Activated CD4-positive, alpha-beta T cell treated with anti-CD3 and anti-CD28 coated beads for 36 hours (primary cell): ENCODE measurements at regions of chr3 and their contacts with region 1.

Region 1: GRCh38 chr3:179147873-179148615 is at the start of gene PIK3CA:
- DNase-seq: peak; percentile 95
- ATAC-seq: peak; percentile 79
- H3K4me3 Mint-ChIP-seq: no peak within 1 kb of the TSS
- H3K27ac Mint-ChIP-seq: peak within 1 kb of the TSS; percentile 94
- H3K4me1 Mint-ChIP-seq: peaks cover 39% of the 10 kb centered on the region
- H3K27me3 Mint-ChIP-seq: peaks cover 3% of the 10 kb centered on the region
- total RNA-seq, gene PIK3CA: 15.5 to 17.7 TPM

Region 2: GRCh38 chr3:179071550-179072397 is 76.3 kb before region 1 on chr3 and contains the start of gene ZMAT3:
- CTCF ChIA-PET with region 1: interaction called, 6 read pairs
- POLR2A ChIA-PET with region 1: no interaction called
- intact Hi-C with region 1: loop called (anchors 1 kb)
- DNase-seq: peak; percentile 90
- ATAC-seq: peak; percentile 86
- H3K4me3 Mint-ChIP-seq: peak within 1 kb of the TSS; percentile 95
- H3K27ac Mint-ChIP-seq: peak within 1 kb of the TSS; percentile 92
- H3K4me1 Mint-ChIP-seq: peaks cover 41% of the 10 kb centered on the region
- H3K27me3 Mint-ChIP-seq: no peaks in the 10 kb centered on the region
- total RNA-seq, gene ZMAT3: 9.5 to 9.9 TPM

Region 3: GRCh38 chr3:179227349-179227748 is 79.3 kb after region 1 on chr3:
- CTCF ChIA-PET with region 1: no interaction called
- POLR2A ChIA-PET with region 1: interaction called, 11 read pairs
- intact Hi-C with region 1: no loop called
- DNase-seq: no peak
- ATAC-seq: peak; percentile 51
- H3K4me3 Mint-ChIP-seq: no peak overlapping the region
- H3K27ac Mint-ChIP-seq: peak overlapping the region; percentile 47
- H3K4me1 Mint-ChIP-seq: peaks cover 5% of the 10 kb centered on the region
- H3K27me3 Mint-ChIP-seq: no peaks in the 10 kb centered on the region

Region 4: DNA sequence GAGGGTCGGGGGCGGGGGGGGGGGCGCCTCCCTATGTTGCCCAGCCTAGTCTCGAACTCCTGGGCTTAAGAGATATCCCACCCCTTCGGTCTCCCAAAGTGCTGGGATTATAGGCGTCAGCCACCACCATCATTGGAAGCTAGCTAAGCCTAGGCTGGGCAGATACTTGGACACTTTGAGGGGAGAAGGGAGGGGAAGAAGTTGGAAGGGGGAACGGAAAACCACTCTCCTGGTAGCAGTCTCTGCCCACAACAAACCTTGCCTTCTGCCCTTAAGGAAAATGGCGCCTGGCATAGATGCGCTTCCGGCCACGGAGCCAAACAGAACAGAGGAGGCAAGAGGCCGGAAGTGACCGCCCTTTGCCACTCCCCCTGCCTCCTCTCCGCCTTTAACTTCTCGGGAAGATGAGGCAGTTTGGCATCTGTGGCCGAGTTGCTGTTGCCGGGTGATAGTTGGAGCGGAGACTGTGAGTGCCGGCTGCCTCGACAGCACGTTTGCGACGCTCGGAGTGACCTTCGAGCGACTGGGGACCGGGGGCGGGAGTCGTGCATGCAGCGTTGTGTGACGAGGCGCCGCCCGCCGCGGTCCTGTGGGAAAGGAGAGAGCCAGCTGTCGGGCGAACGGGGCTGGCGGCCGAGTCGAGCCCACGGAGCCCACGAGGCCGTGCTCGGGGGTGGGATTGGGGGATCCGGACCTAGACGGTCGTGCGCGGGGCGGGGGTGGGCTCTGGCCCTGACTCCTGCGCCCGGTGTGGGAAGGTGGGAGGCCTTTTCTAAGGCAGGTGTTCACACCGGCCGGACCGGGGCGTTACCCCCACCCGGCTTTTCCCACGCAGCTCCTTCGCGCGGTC is 199.5 kb after region 1 on chr3 and contains the start of gene MFN1:
- CTCF ChIA-PET with region 1: no interaction called
- POLR2A ChIA-PET with region 1: no interaction called
- intact Hi-C with region 1: loop called in 1 of 2 experiments (anchors 1 kb)
- DNase-seq: peak; percentile 94
- ATAC-seq: peak; percentile 98
- H3K4me3 Mint-ChIP-seq: peak within 1 kb of the TSS; percentile 99
- H3K27ac Mint-ChIP-seq: peak within 1 kb of the TSS; percentile 93
- H3K4me1 Mint-ChIP-seq: peaks cover 22% of the 10 kb centered on the region
- H3K27me3 Mint-ChIP-seq: no peaks in the 10 kb centered on the region
- total RNA-seq, gene MFN1: 24.4 to 30.4 TPM

Region 5: DNA sequence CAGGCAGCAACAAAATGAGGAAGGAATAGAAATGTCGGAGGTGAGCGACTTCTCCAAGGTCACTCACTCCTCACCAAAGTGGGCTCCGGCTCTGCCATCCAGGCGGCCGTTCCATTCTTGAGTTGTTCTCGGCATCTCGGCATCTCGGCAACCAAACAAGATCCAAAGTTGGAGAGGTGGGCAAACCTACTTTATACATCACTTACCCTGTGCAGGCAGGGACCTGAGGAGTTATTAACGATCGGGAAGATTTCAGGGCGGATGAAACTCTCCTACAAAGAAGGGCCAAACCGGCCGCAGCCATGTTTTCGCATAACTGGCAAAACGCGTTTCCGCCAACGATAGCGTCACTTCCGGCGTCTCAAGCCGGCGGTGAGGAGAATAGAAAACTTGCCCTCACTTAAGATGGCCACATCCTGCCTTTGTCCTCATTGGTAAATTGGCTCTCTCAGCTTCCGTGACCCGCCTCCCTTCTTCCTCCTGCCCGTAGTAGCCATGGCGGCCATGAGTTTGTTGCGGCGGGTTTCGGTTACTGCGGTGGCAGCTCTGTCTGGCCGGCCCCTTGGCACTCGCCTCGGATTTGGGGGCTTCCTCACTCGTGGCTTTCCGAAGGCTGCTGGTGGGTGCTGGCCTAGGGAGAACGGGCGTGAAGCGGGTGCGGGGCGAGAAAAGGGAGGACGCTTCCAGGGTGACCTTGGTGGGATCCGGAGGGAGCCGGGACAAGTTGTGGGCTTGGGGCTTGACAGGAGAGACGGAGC is 456.5 kb after region 1 on chr3 and contains the starts of genes MRPL47 and NDUFB5:
- CTCF ChIA-PET with region 1: no interaction called
- POLR2A ChIA-PET with region 1: no interaction called
- intact Hi-C with region 1: loop called (anchors 1 to 5 kb)
- DNase-seq: peak; percentile 95
- ATAC-seq: peak; percentile 92
- H3K4me3 Mint-ChIP-seq: peak within 1 kb of the TSS; percentile 92
- H3K27ac Mint-ChIP-seq: peak within 1 kb of the TSS; percentile 100
- H3K4me1 Mint-ChIP-seq: peaks cover 37% of the 10 kb centered on the region
- H3K27me3 Mint-ChIP-seq: no peaks in the 10 kb centered on the region
- total RNA-seq, gene MRPL47: 49.8 to 56.4 TPM
- total RNA-seq, gene NDUFB5: 105 to 110 TPM